ENCODE measurements at regions of chr10 and their contacts with region 1.

Region 1: GRCh38 chr10:122142641-122143237 is 128.4 kb upstream of the BTBD16 start:
- DNase-seq: no peak
- ATAC-seq: no peak

Region 2: DNA sequence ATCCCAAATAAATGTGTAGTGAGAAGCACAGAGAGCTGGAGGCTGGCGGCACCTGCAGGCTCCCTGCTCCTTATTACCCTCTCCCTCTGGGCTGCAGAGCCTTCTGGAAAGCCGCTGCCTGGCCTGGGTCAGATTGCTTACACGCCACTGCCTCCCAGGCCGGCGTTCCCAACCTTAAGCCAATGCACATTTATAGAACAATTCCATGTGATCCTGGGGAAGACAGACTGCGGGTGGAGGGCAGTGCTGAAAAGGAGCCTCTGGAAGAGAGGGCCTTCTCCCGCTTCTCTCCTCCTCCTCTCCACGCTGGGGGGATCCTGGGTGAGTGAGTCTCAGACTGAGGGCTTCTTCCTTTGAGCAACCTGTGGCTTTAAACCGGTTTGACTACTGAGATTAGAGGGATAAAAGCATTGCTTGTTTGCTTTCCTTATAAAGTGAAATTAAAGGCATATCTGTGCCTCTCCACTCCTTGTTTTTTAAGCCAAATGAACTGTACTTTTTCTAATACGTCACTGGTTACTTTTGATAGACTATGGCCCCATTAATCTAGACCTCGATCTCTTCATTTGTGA is 148.3 kb before region 1 on chr10:
- intact Hi-C with region 1: loop called (anchors 2 kb)
- DNase-seq: no peak
- ATAC-seq: peak; percentile 79

Region 3: GRCh38 chr10:122051251-122051996 is 91.3 kb before region 1 on chr10:
- intact Hi-C with region 1: loop called (anchors 5 kb)
- DNase-seq: no peak
- ATAC-seq: peak; percentile 26

Region 4: GRCh38 chr10:122126763-122127659 is 15.7 kb before region 1 on chr10:
- intact Hi-C with region 1: loop called (anchors 1 kb)
- DNase-seq: no peak
- ATAC-seq: peak; percentile 74

Region 5: GRCh38 chr10:122267849-122268737 is 125.4 kb after region 1 on chr10:
- intact Hi-C with region 1: loop called (anchors 5 kb)
- DNase-seq: no peak
- ATAC-seq: peak; percentile 52

Measured in Right ventricle myocardium inferior (tissue), 1 donor.